Body of pancreas (tissue), 4 donors: ENCODE measurements at regions of chr14 and their contacts with region 1.

Region 1: GRCh38 chr14:102050625-102051024 is 36.2 kb downstream of the HSP90AA1 start:
- DNase-seq: no peak
- ATAC-seq: no peak
- H3K4me3 ChIP-seq: no peak overlapping the region
- H3K27ac ChIP-seq: no peak overlapping the region
- H3K4me1 ChIP-seq: peaks cover 18% of the 10 kb centered on the region
- H3K27me3 ChIP-seq: no peaks in the 10 kb centered on the region
- CTCF ChIP-seq: no peak
- POLR2A ChIP-seq: no peak

Region 2: GRCh38 chr14:101040538-101041442 is 1009.8 kb before region 1 on chr14:
- intact Hi-C with region 1: no loop called
- DNase-seq: peak; percentile 28 to 60 (median 48)
- ATAC-seq: peak; percentile 88
- H3K4me3 ChIP-seq: no peak overlapping the region
- H3K27ac ChIP-seq: peak overlapping the region; percentile 42 to 75 (median 56)
- H3K4me1 ChIP-seq: peaks cover 20% of the 10 kb centered on the region
- H3K27me3 ChIP-seq: no peaks in the 10 kb centered on the region
- CTCF ChIP-seq: no peak
- POLR2A ChIP-seq: no peak

Region 3: DNA sequence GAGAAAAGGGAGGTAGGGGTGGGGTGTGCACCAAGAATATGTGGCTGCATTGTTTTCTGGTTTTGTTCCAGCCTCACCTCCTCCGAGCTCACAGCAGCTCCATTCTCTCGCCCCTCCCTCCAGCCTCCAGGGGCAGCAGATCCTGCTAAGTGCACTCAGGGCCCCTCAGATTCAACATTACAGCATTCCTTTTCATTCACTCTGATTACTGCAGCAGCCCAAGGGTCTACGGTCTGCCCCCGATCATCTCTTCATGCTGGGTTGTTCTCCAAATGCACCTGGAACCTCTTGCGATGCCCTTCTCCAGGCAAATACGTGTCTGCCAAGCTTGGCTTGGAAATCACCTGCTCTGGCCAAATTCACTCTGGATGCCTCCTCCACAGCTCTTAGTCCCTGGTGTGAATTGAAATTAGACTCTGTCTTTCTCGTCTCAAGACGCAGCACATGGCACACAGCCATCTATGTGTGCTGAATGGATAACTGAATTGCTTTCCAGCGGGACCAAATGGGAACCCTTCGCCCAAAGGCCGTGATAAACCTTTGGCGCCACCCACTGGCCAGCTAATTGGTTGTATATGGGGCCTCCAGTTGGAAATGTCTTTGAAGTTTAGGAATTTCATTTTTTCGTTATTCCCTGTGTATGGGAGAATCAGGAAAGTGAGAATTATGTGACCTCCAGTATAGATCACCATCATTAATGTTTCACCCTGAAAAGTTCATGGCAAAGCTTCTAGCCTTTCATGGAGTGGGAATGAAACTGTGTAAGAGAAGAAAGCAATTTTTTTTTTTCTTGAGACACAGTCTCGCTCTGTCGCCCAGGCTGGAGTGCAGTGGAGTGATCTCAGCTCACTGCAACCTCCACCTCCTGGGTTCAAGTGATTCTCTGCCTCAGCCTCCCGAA is 45.8 kb after region 1 on chr14:
- intact Hi-C with region 1: loop called (anchors 5 kb)
- DNase-seq: peak; percentile 86 to 92 (median 87)
- ATAC-seq: peak; percentile 86
- H3K4me3 ChIP-seq: no peak overlapping the region
- H3K27ac ChIP-seq: no peak overlapping the region
- H3K4me1 ChIP-seq: peaks cover 4% of the 10 kb centered on the region
- H3K27me3 ChIP-seq: no peaks in the 10 kb centered on the region
- CTCF ChIP-seq: peak; percentile 68 to 91 (median 84)
- POLR2A ChIP-seq: no peak